Sciatic nerve (tissue), 2 donors: ENCODE measurements at regions of chr12 and their contacts with region 1.

Region 1: GRCh38 chr12:109264943-109265650 is 44.0 kb downstream of the FOXN4 start:
- DNase-seq: no peak
- ATAC-seq: peak; percentile 22

Region 2: GRCh38 chr12:109069307-109070231 is 195.5 kb before region 1 on chr12:
- intact Hi-C with region 1: no loop called
- DNase-seq: no peak
- ATAC-seq: no peak

Region 3: DNA sequence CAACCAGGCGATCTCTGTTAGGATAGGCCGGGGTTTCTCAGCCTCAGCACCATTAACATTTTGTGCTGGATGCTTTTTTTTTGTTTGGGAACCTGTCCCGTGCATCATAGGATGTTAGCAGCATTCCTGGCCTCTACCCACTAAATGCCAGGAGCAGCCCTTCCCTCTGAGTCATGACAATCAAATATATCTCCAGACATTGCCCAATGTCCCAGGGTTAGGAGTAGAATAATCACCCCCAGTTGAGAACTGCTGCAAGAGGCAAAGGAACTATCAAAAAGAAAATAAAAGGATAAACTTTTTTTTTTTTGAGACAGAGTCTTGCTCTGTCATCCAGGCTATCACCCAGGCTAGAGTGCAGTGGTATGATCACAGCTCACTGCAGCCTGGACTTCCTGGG is 72.7 kb before region 1 on chr12:
- intact Hi-C with region 1: no loop called
- DNase-seq: no peak
- ATAC-seq: no peak

Region 4: DNA sequence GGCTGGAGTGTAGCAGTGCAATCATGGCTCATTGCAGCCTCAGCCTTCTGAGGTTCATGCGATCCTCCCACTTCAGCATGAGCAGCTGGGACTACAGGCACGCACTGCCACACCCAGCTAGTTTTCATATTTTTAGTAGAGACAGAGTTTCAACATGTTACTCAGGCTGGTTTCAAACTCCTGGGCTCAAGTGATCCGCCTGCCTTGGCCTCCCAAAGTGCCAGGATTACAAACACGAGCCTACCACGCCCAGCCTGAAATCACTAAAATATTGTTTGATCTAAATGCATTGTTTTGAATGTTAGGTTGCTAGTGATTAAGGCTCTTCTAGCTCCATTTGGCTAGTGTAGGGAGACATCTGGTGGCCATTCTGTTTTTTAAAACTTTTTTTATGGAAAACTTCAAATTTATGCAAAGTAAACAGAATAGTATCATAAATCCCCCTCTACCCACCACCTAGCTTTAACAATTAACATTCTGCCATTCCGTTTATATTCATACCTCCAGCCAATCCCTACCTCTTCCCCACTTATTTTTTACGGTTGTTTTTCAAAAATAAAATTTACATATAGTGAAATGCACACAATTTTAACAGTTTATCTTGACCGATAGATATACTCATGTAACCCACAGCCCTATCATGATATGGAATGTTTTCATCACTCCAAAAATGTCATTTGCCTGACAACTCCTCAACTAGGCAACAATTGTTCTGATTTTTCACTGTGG is 120.4 kb after region 1 on chr12:
- intact Hi-C with region 1: loop called (anchors 5 kb)
- DNase-seq: no peak
- ATAC-seq: peak; percentile 91